CD8-positive, alpha-beta T cell (primary cell): ENCODE measurements at regions of chr19 and their contacts with region 1.

Region 1: GRCh38 chr19:36772311-36773222 is at the start of gene ZNF850:
- DNase-seq: peak; percentile 86 to 97 (median 95)
- ATAC-seq: peak; percentile 90
- H3K4me3 ChIP-seq: peak within 1 kb of the TSS; percentile 77 to 100
- H3K4me3 Mint-ChIP-seq: peak within 1 kb of the TSS; percentile 99
- H3K27ac ChIP-seq: peak within 1 kb of the TSS; percentile 85 to 89
- H3K27ac Mint-ChIP-seq: peak within 1 kb of the TSS; percentile 94
- H3K4me1 ChIP-seq: peaks cover 21% of the 10 kb centered on the region
- H3K4me1 Mint-ChIP-seq: peaks cover 23% of the 10 kb centered on the region
- H3K27me3 ChIP-seq: no peaks in the 10 kb centered on the region
- H3K27me3 Mint-ChIP-seq: no peaks in the 10 kb centered on the region
- CTCF ChIP-seq: no peak
- total RNA-seq, gene ZNF850: 1.5 to 2.7 TPM

Region 2: GRCh38 chr19:35805526-35806102 is 967.0 kb before region 1 on chr19:
- CTCF ChIA-PET with region 1: no interaction called
- POLR2A ChIA-PET with region 1: no interaction called
- intact Hi-C with region 1: no loop called
- DNase-seq: no peak
- ATAC-seq: no peak
- H3K4me3 ChIP-seq: no peak overlapping the region
- H3K4me3 Mint-ChIP-seq: no peak overlapping the region
- H3K27ac ChIP-seq: no peak overlapping the region
- H3K27ac Mint-ChIP-seq: no peak overlapping the region
- H3K4me1 ChIP-seq: no peaks in the 10 kb centered on the region
- H3K4me1 Mint-ChIP-seq: peaks cover 10% of the 10 kb centered on the region
- H3K27me3 ChIP-seq: no peaks in the 10 kb centered on the region
- H3K27me3 Mint-ChIP-seq: peaks cover 3% of the 10 kb centered on the region
- CTCF ChIP-seq: no peak

Region 3: GRCh38 chr19:35899547-35900214 is 872.9 kb before region 1 on chr19:
- CTCF ChIA-PET with region 1: no interaction called
- POLR2A ChIA-PET with region 1: no interaction called
- intact Hi-C with region 1: loop called in 1 of 2 experiments (anchors 5 kb)
- DNase-seq: peak; percentile 68 to 97 (median 87)
- ATAC-seq: peak; percentile 59
- H3K4me3 ChIP-seq: peak overlapping the region; percentile 95 to 97
- H3K4me3 Mint-ChIP-seq: peak overlapping the region; percentile 100
- H3K27ac ChIP-seq: peak overlapping the region; percentile 85 to 99
- H3K27ac Mint-ChIP-seq: peak overlapping the region; percentile 95
- H3K4me1 ChIP-seq: peaks cover 45% of the 10 kb centered on the region
- H3K4me1 Mint-ChIP-seq: peaks cover 57% of the 10 kb centered on the region
- H3K27me3 ChIP-seq: no peaks in the 10 kb centered on the region
- H3K27me3 Mint-ChIP-seq: no peaks in the 10 kb centered on the region
- CTCF ChIP-seq: no peak

Region 4: GRCh38 chr19:36573020-36573885 is 199.3 kb before region 1 on chr19 and contains the start of gene ZNF529:
- CTCF ChIA-PET with region 1: no interaction called
- POLR2A ChIA-PET with region 1: interaction called, 3 read pairs
- intact Hi-C with region 1: loop called (anchors 1 kb)
- DNase-seq: peak; percentile 75 to 98 (median 85)
- ATAC-seq: peak; percentile 93
- H3K4me3 ChIP-seq: peak within 1 kb of the TSS; percentile 87 to 99
- H3K4me3 Mint-ChIP-seq: peak within 1 kb of the TSS; percentile 87
- H3K27ac ChIP-seq: peak within 1 kb of the TSS; percentile 96 to 98
- H3K27ac Mint-ChIP-seq: peak within 1 kb of the TSS; percentile 99
- H3K4me1 ChIP-seq: peaks cover 19% of the 10 kb centered on the region
- H3K4me1 Mint-ChIP-seq: peaks cover 45% of the 10 kb centered on the region
- H3K27me3 ChIP-seq: no peaks in the 10 kb centered on the region
- H3K27me3 Mint-ChIP-seq: no peaks in the 10 kb centered on the region
- CTCF ChIP-seq: no peak
- total RNA-seq, gene ZNF529: 44.0 to 46.4 TPM

Region 5: DNA sequence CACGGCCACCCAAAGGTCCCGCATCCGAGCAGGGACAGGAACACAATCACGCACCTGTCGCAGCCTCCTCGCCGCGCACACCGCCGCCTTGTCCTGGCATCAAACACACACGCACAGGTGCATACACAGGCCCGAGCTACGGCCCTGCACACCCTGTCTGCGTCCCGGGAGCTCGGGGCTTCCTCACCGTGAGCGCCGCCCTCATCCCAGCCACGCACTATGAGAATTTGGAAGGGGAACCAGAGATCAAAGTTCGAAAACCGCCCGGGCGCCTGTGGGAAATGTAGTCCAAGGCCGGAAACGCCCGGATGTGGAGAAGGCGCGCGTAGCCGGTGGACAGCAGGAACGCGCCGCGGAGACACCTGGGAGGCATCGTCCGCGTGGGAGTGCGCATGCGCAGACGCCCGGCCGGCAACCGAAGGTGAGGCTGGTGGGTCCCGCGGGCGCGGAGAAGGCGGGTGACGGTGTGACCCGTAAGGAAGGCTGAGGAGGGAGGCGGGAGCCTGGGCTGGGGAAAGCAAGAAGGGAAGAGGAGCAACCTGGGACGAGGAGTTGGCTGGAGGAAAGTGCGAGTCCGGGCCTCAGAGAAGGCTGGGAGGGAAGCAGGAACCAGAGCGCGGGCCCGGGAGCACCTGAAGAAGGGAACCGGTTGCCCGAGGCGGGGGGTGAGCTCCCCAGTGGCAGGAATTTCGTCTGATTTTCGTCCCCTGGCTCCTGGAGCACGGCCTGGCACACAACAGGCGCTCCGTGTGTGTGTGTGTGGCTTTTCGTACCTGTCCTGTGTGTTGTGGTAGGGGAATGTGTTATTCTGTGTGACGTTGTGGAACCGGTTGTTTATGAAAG is 85.1 kb before region 1 on chr19 and contains the start of gene ZNF567:
- CTCF ChIA-PET with region 1: no interaction called
- POLR2A ChIA-PET with region 1: no interaction called
- intact Hi-C with region 1: loop called (anchors 1 kb)
- DNase-seq: peak; percentile 91 to 99 (median 98)
- ATAC-seq: peak; percentile 91
- H3K4me3 ChIP-seq: peak within 1 kb of the TSS; percentile 82 to 87
- H3K4me3 Mint-ChIP-seq: peak within 1 kb of the TSS; percentile 99
- H3K27ac ChIP-seq: peak within 1 kb of the TSS; percentile 71 to 81
- H3K27ac Mint-ChIP-seq: peak within 1 kb of the TSS; percentile 96
- H3K4me1 ChIP-seq: peaks cover 18% of the 10 kb centered on the region
- H3K4me1 Mint-ChIP-seq: peaks cover 35% of the 10 kb centered on the region
- H3K27me3 ChIP-seq: no peaks in the 10 kb centered on the region
- H3K27me3 Mint-ChIP-seq: no peaks in the 10 kb centered on the region
- CTCF ChIP-seq: no peak
- total RNA-seq, gene ZNF567: 10.7 to 11.1 TPM

Region 6: GRCh38 chr19:36850559-36851442 is 78.2 kb after region 1 on chr19 and contains the start of gene ZNF345:
- CTCF ChIA-PET with region 1: interaction called, 3 read pairs
- POLR2A ChIA-PET with region 1: interaction called, 8 read pairs
- intact Hi-C with region 1: loop called (anchors 1 kb)
- DNase-seq: peak; percentile 66 to 94 (median 85)
- ATAC-seq: peak; percentile 81
- H3K4me3 ChIP-seq: peak within 1 kb of the TSS; percentile 83 to 92
- H3K4me3 Mint-ChIP-seq: no peak within 1 kb of the TSS
- H3K27ac ChIP-seq: peak within 1 kb of the TSS; percentile 74 to 94
- H3K27ac Mint-ChIP-seq: no peak within 1 kb of the TSS
- H3K4me1 ChIP-seq: peaks cover 14% of the 10 kb centered on the region
- H3K4me1 Mint-ChIP-seq: peaks cover 20% of the 10 kb centered on the region
- H3K27me3 ChIP-seq: peaks cover 0 to 2% of the 10 kb centered on the region in 2 experiments
- H3K27me3 Mint-ChIP-seq: no peaks in the 10 kb centered on the region
- CTCF ChIP-seq: no peak
- total RNA-seq, gene ZNF345: 7.8 to 8.0 TPM

Region 7: DNA sequence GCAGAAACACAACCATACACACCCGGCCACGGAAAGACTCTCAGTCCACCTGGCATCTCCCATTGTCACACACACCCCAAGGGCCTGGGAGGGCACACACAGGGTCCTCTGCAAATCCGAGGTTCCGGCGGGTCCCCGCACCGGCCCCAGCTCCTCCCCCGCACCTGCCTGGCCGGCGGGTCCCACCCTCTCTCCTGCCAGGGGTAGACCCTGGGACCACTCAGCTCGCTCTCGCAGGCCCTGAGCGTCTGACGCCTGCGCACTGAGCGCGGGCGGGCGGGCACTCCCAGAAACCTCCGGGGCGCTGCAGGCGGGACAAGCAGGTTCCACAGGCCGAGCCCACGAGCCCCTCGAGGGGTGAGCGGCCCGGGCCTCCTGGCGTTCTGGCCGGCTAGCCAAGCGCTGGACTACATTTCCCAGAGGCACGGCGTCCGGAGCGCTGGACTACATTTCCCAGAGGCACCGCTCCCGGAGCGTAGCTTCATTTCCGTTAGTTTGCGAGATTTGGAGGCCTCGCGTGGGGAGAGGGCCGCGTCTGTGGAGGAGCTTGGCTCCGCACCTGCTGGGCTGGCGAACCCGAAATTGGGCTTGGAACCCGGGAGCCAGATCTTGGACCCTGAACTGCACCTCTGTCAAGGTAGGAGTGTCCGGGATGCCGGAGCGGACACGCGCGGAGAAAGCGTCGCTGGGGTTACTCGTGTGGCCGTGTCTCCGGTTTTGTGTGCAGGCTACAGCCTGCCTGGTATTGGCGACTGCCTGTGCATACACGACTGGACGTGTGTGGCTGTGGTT is 305.6 kb after region 1 on chr19 and contains the start of gene ZNF420:
- CTCF ChIA-PET with region 1: no interaction called
- POLR2A ChIA-PET with region 1: no interaction called
- intact Hi-C with region 1: loop called (anchors 2 kb)
- DNase-seq: peak; percentile 78 to 96 (median 89)
- ATAC-seq: peak; percentile 88
- H3K4me3 ChIP-seq: peak within 1 kb of the TSS; percentile 60 to 71
- H3K4me3 Mint-ChIP-seq: peak within 1 kb of the TSS; percentile 89
- H3K27ac ChIP-seq: peak within 1 kb of the TSS; percentile 56 to 82
- H3K27ac Mint-ChIP-seq: peak within 1 kb of the TSS; percentile 92
- H3K4me1 ChIP-seq: peaks cover 9% of the 10 kb centered on the region
- H3K4me1 Mint-ChIP-seq: peaks cover 34% of the 10 kb centered on the region
- H3K27me3 ChIP-seq: no peaks in the 10 kb centered on the region
- H3K27me3 Mint-ChIP-seq: no peaks in the 10 kb centered on the region
- CTCF ChIP-seq: no peak
- total RNA-seq, gene ZNF420: 7.0 to 8.9 TPM

Region 8: GRCh38 chr19:37370880-37371661 is 598.5 kb after region 1 on chr19 and contains the start of gene ZNF527:
- CTCF ChIA-PET with region 1: no interaction called
- POLR2A ChIA-PET with region 1: no interaction called
- intact Hi-C with region 1: loop called in 1 of 2 experiments (anchors 2 kb)
- DNase-seq: peak; percentile 94 to 98 (median 97)
- ATAC-seq: peak; percentile 92
- H3K4me3 ChIP-seq: peak within 1 kb of the TSS; percentile 80 to 95
- H3K4me3 Mint-ChIP-seq: peak within 1 kb of the TSS; percentile 99
- H3K27ac ChIP-seq: peak within 1 kb of the TSS; percentile 82 to 90
- H3K27ac Mint-ChIP-seq: peak within 1 kb of the TSS; percentile 96
- H3K4me1 ChIP-seq: peaks cover 7% of the 10 kb centered on the region
- H3K4me1 Mint-ChIP-seq: peaks cover 20% of the 10 kb centered on the region
- H3K27me3 ChIP-seq: no peaks in the 10 kb centered on the region
- H3K27me3 Mint-ChIP-seq: no peaks in the 10 kb centered on the region
- CTCF ChIP-seq: no peak
- total RNA-seq, gene ZNF527: 12.9 to 14.2 TPM